ENCODE measurements at regions of chr14 and their contacts with region 1.

Region 1: DNA sequence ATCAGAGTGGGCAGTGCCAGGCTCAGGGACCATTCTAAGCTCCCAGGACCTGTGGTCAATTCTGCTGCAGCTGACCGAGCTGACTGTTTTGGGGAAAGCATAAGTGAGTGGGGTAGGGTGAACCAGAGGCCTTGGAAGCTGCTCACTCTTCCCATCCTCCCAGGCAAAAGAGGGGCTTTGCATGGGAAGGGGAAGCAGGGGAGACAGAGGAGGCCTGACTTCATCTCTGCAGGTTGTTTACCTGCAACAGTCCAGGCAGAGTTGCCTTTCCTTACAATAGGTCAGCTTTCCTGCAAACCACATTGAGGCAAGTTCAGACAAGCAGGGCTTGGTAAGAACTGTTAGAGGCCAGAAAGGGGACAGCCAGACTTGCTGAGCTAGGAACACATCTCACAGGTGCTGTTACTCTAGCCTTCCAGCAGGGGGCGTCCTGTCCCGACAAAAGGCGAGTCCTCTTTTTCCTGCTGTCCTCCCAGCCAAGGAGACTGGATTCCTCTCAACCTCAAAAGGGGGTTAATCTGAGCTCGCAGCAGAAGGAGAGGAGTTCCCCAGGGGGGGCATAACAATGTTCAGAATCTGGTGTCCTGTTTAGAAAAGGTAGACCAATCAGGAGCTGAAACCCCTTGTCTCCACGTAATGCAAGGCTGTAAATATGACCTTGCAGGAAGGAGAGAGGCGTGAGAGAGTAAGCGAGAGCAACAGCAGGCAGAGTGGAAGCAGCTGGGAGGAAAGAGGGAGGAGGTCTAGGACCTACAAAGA is 4.3 kb upstream of the DHRS2 start:
- DNase-seq: peak; percentile 27 to 30
- ATAC-seq: peak; percentile 72 to 75
- H3K4me3 ChIP-seq: peak overlapping the region in 1 of 4 donors; percentile 34
- H3K27ac ChIP-seq: no peak overlapping the region
- H3K4me1 ChIP-seq: no peaks in the 10 kb centered on the region
- H3K27me3 ChIP-seq: no peaks in the 10 kb centered on the region
- CTCF ChIP-seq: peak; percentile 65 to 86 (median 76)
- POLR2A ChIP-seq: no peak

Region 2: DNA sequence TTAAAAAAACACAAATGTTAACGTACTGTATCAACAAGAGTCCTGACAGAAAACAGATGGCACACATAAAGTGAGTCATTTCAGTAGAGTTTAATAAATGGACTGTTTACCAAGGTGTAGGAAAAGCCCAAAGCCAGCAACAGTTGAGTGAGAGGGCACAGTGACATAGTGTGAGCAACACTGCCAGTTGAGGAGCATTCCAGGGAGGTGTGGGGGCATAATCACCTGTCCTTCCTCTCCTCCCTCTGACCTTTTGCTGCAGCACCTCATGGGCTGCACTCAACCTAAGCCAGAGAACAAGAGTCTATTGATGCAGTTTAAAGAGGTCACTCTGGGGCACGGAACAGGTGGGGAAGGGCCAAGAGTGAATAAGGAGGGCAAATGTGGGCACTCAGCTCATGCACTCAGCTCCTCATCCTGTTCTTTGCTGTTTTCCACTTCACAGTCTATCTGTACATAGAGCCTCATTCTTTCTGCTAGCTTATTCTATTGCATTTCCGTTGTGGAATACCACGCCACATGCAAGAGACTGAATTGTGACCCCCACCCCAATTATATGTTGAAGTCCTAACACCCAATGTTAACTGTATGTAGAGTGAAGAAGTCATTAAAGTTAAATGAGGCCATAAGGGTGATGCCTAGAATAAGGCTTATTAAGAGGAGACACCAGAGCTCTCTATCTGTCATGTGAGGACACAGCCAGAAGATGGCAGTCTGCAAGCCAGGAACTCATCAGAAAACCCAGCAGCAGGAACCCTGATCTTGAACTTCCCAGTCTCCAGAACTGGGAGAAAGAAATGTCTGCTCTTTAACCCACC is 33.7 kb after region 1 on chr14:
- in situ Hi-C with region 1: no loop called
- intact Hi-C with region 1: no loop called
- DNase-seq: no peak
- ATAC-seq: no peak
- H3K4me3 ChIP-seq: no peak overlapping the region
- H3K27ac ChIP-seq: no peak overlapping the region
- H3K4me1 ChIP-seq: no peaks in the 10 kb centered on the region
- H3K27me3 ChIP-seq: no peaks in the 10 kb centered on the region
- CTCF ChIP-seq: no peak
- POLR2A ChIP-seq: no peak

Region 3: GRCh38 chr14:23910101-23910875 is 278.4 kb after region 1 on chr14:
- in situ Hi-C with region 1: loop called in 1 of 4 experiments (anchors 25 kb)
- intact Hi-C with region 1: loop called (anchors 5 kb)
- DNase-seq: no peak
- ATAC-seq: peak in 1 of 2 donors; percentile 49
- H3K4me3 ChIP-seq: no peak overlapping the region
- H3K27ac ChIP-seq: no peak overlapping the region
- H3K4me1 ChIP-seq: no peaks in the 10 kb centered on the region
- H3K27me3 ChIP-seq: no peaks in the 10 kb centered on the region
- CTCF ChIP-seq: peak in 2 of 5 experiments; percentile 37 to 48
- POLR2A ChIP-seq: no peak

Region 4: DNA sequence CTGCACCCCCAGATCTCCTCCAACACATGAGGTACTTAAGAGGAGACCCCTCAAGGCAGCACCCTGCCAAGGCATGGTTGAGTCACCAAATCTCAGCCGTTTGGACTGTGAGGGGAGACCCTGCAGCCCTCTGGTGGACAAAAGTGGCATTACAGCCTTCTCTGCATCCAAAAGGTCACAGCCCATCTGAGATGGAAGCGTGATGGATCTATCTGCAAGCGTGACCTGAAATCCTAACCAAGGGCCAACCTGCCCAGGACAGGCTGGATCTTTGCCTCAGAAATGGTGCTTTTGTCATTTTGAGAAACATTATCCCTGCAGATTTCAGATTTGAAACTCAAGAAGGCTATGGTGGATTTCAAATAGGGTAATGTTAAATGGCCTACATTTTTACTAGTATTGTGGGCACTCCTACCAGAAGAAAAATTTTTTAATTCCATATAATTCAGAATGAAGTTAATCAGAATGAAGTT is 298.0 kb after region 1 on chr14:
- in situ Hi-C with region 1: loop called in 3 of 4 experiments (anchors 25 kb)
- intact Hi-C with region 1: loop called (anchors 2 kb)
- DNase-seq: peak; percentile 24 to 58
- ATAC-seq: peak in 1 of 2 donors; percentile 77
- H3K4me3 ChIP-seq: no peak overlapping the region
- H3K27ac ChIP-seq: no peak overlapping the region
- H3K4me1 ChIP-seq: peaks cover 0 to 4% of the 10 kb centered on the region in 2 donors
- H3K27me3 ChIP-seq: no peaks in the 10 kb centered on the region
- CTCF ChIP-seq: peak; percentile 54 to 86 (median 74)
- POLR2A ChIP-seq: no peak

Region 5: GRCh38 chr14:24108336-24108874 is 476.5 kb after region 1 on chr14:
- in situ Hi-C with region 1: no loop called
- intact Hi-C with region 1: loop called (anchors 5 kb)
- DNase-seq: no peak
- ATAC-seq: peak in 1 of 2 donors; percentile 15
- H3K4me3 ChIP-seq: no peak overlapping the region
- H3K27ac ChIP-seq: peak overlapping the region; percentile 2 to 55 (median 29)
- H3K4me1 ChIP-seq: peaks cover 9 to 12% of the 10 kb centered on the region in 2 donors
- H3K27me3 ChIP-seq: no peaks in the 10 kb centered on the region
- CTCF ChIP-seq: no peak
- POLR2A ChIP-seq: no peak